ENCODE measurements at regions of chr2 and their contacts with region 1.

Region 1: DNA sequence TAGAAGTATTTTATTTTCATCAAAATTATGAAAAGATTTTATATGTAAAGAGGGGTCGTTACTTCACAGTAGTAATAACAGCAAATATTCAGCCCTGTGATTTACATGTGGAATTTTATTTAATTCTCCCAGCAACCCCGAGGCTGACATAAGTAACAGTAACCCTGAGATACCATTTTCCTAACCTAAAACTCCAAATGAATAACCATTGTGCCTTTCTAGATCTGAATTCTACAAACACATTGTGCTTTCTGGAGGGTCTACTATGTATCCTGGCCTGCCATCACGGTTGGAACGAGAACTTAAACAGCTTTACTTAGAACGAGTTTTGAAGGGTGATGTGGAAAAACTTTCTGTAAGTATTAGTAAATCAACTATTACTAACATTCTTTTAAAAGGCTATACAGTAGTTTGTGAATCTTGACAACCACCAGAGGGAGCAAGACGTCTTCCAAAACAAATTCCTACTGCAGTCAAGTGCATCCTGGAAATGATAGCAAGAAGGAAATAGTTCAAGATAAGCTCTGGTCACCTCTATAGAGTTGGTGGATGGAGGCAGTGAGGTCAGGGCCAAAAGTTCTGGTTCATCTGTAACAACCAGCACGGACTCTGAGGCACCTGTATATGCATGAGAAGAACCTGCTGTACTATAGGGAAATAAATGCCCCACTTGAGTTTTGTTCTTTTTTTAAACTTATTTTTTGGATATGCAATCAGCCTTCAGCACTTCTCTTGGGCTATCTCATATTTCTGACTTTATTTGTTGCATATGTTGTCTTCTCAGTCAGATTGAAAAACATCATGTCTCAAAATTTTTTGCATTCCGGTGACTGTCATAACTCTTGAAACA is 37.4 kb downstream of the ACTR2 start:
- DNase-seq: peak in 6 of 9 donors; percentile 23 to 39 (median 34)
- ATAC-seq: no peak
- H3K4me3 ChIP-seq: no peak overlapping the region
- H3K4me3 Mint-ChIP-seq: no peak overlapping the region
- H3K27ac ChIP-seq: no peak overlapping the region
- H3K27ac Mint-ChIP-seq: peak overlapping the region in 5 of 9 donors; percentile 13 to 71 (median 57)
- H3K4me1 ChIP-seq: no peaks in the 10 kb centered on the region
- H3K4me1 Mint-ChIP-seq: peaks cover 8 to 28% (median 10%) of the 10 kb centered on the region in 7 donors
- H3K27me3 ChIP-seq: no peaks in the 10 kb centered on the region
- H3K27me3 Mint-ChIP-seq: no peaks in the 10 kb centered on the region

Region 2: DNA sequence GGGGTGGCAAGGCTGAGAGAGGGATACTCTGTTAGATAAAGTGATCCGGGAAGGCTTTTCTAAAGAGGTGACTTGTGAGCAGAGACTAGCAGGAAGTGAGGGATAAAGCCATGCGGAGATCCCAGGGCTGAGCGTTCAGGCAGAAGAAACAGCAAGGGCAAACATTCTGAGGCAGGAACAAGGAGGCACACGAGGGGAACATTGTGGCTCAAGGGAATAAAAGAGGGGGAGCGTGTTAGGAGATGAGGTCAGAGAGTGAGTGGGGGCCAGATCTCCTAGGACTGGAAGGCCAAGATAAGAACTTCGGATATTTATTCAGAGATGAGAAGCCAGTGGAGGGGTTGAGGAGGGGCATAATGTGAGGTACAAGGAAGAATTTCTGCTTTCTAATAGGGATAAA is 29.7 kb after region 1 on chr2:
- CTCF ChIA-PET with region 1: no interaction called
- POLR2A ChIA-PET with region 1: no interaction called
- intact Hi-C with region 1: no loop called
- DNase-seq: no peak
- ATAC-seq: no peak
- H3K4me3 ChIP-seq: no peak overlapping the region
- H3K4me3 Mint-ChIP-seq: no peak overlapping the region
- H3K27ac ChIP-seq: no peak overlapping the region
- H3K27ac Mint-ChIP-seq: no peak overlapping the region
- H3K4me1 ChIP-seq: peaks cover 0 to under 1% of the 10 kb centered on the region in 2 donors
- H3K4me1 Mint-ChIP-seq: peaks cover 0 to 22% (median 5%) of the 10 kb centered on the region in 7 donors
- H3K27me3 ChIP-seq: no peaks in the 10 kb centered on the region
- H3K27me3 Mint-ChIP-seq: peaks cover 0 to 41% (median 0%) of the 10 kb centered on the region in 5 donors

Region 3: GRCh38 chr2:65350684-65351083 is 85.6 kb after region 1 on chr2:
- CTCF ChIA-PET with region 1: no interaction called
- POLR2A ChIA-PET with region 1: no interaction called
- intact Hi-C with region 1: loop called in 1 of 2 experiments (anchors 5 kb)
- DNase-seq: peak in 4 of 9 donors; percentile 3 to 11 (median 4)
- ATAC-seq: no peak
- H3K4me3 ChIP-seq: no peak overlapping the region
- H3K4me3 Mint-ChIP-seq: no peak overlapping the region
- H3K27ac ChIP-seq: no peak overlapping the region
- H3K27ac Mint-ChIP-seq: peak overlapping the region in 1 of 9 donors; percentile 1
- H3K4me1 ChIP-seq: no peaks in the 10 kb centered on the region
- H3K4me1 Mint-ChIP-seq: peaks cover 0 to 24% (median 9%) of the 10 kb centered on the region in 7 donors
- H3K27me3 ChIP-seq: no peaks in the 10 kb centered on the region
- H3K27me3 Mint-ChIP-seq: peaks cover 0 to 14% (median 1%) of the 10 kb centered on the region in 5 donors

Region 4: GRCh38 chr2:65382776-65383357 is 117.8 kb after region 1 on chr2:
- CTCF ChIA-PET with region 1: no interaction called
- POLR2A ChIA-PET with region 1: no interaction called
- intact Hi-C with region 1: loop called in 1 of 2 experiments (anchors 10 kb)
- DNase-seq: peak; percentile 31 to 84 (median 67)
- ATAC-seq: peak; percentile 87
- H3K4me3 ChIP-seq: peak overlapping the region; percentile 11
- H3K4me3 Mint-ChIP-seq: peak overlapping the region; percentile 50 to 83 (median 78)
- H3K27ac ChIP-seq: peak overlapping the region; percentile 41
- H3K27ac Mint-ChIP-seq: peak overlapping the region; percentile 26 to 91 (median 57)
- H3K4me1 ChIP-seq: peaks cover 0 to 23% of the 10 kb centered on the region in 2 donors
- H3K4me1 Mint-ChIP-seq: peaks cover 18 to 41% (median 26%) of the 10 kb centered on the region in 7 donors
- H3K27me3 ChIP-seq: no peaks in the 10 kb centered on the region
- H3K27me3 Mint-ChIP-seq: no peaks in the 10 kb centered on the region

Measured in naive thymus-derived CD4-positive, alpha-beta T cell (primary cell).